Calu3 (cell line): ENCODE measurements at regions of chr2 and their contacts with region 1.

Region 1: DNA sequence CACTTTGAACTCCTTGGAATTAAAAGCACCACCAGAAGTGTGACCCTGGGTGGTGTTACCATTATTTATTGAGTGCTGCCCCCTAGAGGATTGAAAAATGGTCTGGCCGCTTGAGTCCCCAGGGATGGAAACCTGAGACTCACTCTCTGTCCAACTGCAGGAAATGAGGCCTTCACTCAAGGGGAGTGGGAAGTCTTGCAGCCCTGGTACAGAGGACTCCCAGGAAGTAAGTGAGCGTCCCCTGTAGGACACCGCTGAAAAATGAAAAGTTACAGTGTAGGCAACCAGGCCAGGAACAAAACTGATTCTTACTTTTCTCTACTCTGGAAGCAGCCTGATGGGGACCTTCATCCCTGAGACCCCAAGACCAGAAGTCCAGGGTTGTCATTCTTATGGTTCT is 2.2 kb upstream of the NRP2 start:
- DNase-seq: peak; percentile 82
- H3K4me3 Mint-ChIP-seq: no peak overlapping the region
- H3K27ac Mint-ChIP-seq: no peak overlapping the region
- H3K4me1 Mint-ChIP-seq: peaks cover 19% of the 10 kb centered on the region
- H3K27me3 Mint-ChIP-seq: no peaks in the 10 kb centered on the region
- CTCF ChIP-seq: peak; percentile 62

Region 2: GRCh38 chr2:204145263-204145751 is 1534.8 kb before region 1 on chr2:
- CTCF ChIA-PET with region 1: no interaction called
- intact Hi-C with region 1: loop called (anchors 10 kb)
- DNase-seq: peak; percentile 88
- H3K4me3 Mint-ChIP-seq: peak overlapping the region; percentile 65
- H3K27ac Mint-ChIP-seq: peak overlapping the region; percentile 68
- H3K4me1 Mint-ChIP-seq: no peaks in the 10 kb centered on the region
- H3K27me3 Mint-ChIP-seq: peaks cover 54% of the 10 kb centered on the region
- CTCF ChIP-seq: peak; percentile 89

Region 3: DNA sequence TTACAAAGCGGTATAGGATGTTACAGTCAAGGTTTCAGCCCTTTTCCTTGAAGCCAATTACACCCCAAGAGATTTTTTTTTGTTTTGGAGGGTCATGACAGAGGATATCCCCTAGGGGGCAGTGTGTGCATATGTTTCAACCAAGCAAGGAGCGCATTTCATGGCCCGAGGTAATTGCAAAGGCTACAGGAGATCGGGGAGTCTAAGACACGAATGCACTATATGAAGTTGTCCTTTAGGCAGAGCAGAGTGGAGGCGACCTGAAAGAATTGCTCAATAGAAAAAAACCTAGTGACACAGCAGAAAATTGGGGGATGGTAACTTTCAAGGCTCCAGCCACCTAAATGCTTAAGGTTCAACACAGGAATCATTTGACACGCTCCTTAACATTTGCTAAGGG is 1354.6 kb before region 1 on chr2:
- CTCF ChIA-PET with region 1: no interaction called
- intact Hi-C with region 1: loop called (anchors 5 kb)
- DNase-seq: peak; percentile 74
- H3K4me3 Mint-ChIP-seq: no peak overlapping the region
- H3K27ac Mint-ChIP-seq: no peak overlapping the region
- H3K4me1 Mint-ChIP-seq: peaks cover 22% of the 10 kb centered on the region
- H3K27me3 Mint-ChIP-seq: no peaks in the 10 kb centered on the region
- CTCF ChIP-seq: peak; percentile 92

Region 4: DNA sequence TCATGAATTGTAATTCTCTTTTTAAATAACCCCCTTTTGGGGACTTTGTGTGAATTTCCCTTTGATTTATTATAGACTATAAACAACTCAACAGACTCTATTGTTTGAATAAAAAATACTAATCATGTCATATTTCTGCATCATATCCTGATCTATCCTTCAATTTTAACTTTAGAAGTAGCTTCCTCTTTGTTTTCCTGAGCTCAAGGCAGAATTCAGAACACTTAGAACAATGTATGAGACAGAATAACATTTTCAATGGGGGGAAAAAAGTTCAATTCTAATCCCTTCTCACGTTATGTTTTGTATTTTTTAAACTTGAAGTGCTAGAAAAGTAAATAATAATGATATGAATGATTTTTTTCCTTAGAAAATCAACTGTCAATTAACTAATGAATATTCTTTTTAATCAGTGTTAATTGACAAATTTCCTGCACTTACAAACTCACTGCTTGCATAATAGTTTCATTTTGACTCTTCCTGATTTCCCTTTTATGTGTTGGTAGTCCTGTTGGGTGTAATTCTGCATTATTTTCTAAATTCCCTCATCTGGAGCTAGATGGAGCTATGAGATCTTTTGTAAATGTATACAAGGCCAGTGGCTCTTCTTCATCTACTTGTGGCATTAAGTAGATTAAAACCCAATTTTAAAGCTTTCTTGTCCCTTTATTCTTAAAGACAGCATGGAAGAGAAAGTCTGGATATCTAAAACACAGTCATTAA is 808.7 kb before region 1 on chr2:
- CTCF ChIA-PET with region 1: interaction called, 17 read pairs
- intact Hi-C with region 1: loop called (anchors 1 kb)
- DNase-seq: no peak
- H3K4me3 Mint-ChIP-seq: no peak overlapping the region
- H3K27ac Mint-ChIP-seq: no peak overlapping the region
- H3K4me1 Mint-ChIP-seq: no peaks in the 10 kb centered on the region
- H3K27me3 Mint-ChIP-seq: no peaks in the 10 kb centered on the region
- CTCF ChIP-seq: peak; percentile 28

Region 5: GRCh38 chr2:205323929-205324328 is 356.1 kb before region 1 on chr2:
- CTCF ChIA-PET with region 1: no interaction called
- intact Hi-C with region 1: loop called (anchors 10 kb)
- DNase-seq: no peak
- H3K4me3 Mint-ChIP-seq: no peak overlapping the region
- H3K27ac Mint-ChIP-seq: no peak overlapping the region
- H3K4me1 Mint-ChIP-seq: peaks cover 8% of the 10 kb centered on the region
- H3K27me3 Mint-ChIP-seq: no peaks in the 10 kb centered on the region
- CTCF ChIP-seq: no peak

Region 6: GRCh38 chr2:205539601-205540000 is 140.5 kb before region 1 on chr2:
- CTCF ChIA-PET with region 1: no interaction called
- intact Hi-C with region 1: no loop called
- DNase-seq: no peak
- H3K4me3 Mint-ChIP-seq: no peak overlapping the region
- H3K27ac Mint-ChIP-seq: no peak overlapping the region
- H3K4me1 Mint-ChIP-seq: no peaks in the 10 kb centered on the region
- H3K27me3 Mint-ChIP-seq: no peaks in the 10 kb centered on the region
- CTCF ChIP-seq: no peak

Region 7: GRCh38 chr2:205731583-205732071 is 51.6 kb after region 1 on chr2:
- CTCF ChIA-PET with region 1: no interaction called
- intact Hi-C with region 1: no loop called
- DNase-seq: no peak
- H3K4me3 Mint-ChIP-seq: no peak overlapping the region
- H3K27ac Mint-ChIP-seq: no peak overlapping the region
- H3K4me1 Mint-ChIP-seq: no peaks in the 10 kb centered on the region
- H3K27me3 Mint-ChIP-seq: no peaks in the 10 kb centered on the region
- CTCF ChIP-seq: no peak

Region 8: DNA sequence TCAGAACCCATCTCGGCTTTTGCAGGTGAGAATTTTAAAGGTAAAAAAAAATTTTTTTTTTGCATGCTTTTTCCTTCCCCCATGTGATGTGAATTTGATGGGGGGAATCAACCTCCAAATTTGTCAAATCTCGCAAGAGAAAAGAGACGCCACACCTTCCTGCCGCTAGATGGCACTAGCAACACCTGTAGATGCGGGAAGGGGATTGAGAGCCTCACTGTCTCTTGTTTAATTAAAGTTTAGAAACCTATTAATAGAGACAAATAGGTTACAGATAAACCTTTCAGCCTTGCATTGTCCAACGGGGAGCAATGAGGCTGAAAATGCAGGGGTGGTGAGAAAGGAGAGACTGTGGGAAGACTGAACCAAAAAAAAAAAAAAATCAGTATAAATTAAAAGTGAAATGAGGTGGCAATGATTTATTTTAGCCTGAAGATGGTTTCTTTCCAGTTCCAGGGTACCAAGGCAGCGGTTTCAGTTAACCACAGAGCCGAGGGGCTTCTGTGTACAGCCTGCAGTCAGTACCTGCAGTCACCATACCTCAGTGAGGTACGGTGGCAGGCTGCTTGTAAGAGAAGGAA is 86.8 kb after region 1 on chr2:
- CTCF ChIA-PET with region 1: no interaction called
- intact Hi-C with region 1: loop called (anchors 5 kb)
- DNase-seq: peak; percentile 69
- H3K4me3 Mint-ChIP-seq: no peak overlapping the region
- H3K27ac Mint-ChIP-seq: peak overlapping the region; percentile 52
- H3K4me1 Mint-ChIP-seq: peaks cover 57% of the 10 kb centered on the region
- H3K27me3 Mint-ChIP-seq: no peaks in the 10 kb centered on the region
- CTCF ChIP-seq: peak; percentile 83

Region 9: GRCh38 chr2:205885492-205886099 is 205.5 kb after region 1 on chr2:
- CTCF ChIA-PET with region 1: no interaction called
- intact Hi-C with region 1: loop called (anchors 5 kb)
- DNase-seq: peak; percentile 91
- H3K4me3 Mint-ChIP-seq: peak overlapping the region; percentile 31
- H3K27ac Mint-ChIP-seq: no peak overlapping the region
- H3K4me1 Mint-ChIP-seq: peaks cover 9% of the 10 kb centered on the region
- H3K27me3 Mint-ChIP-seq: peaks cover 9% of the 10 kb centered on the region
- CTCF ChIP-seq: peak; percentile 97